ENCODE measurements at regions of chr13 and their contacts with region 1.

Region 1: DNA sequence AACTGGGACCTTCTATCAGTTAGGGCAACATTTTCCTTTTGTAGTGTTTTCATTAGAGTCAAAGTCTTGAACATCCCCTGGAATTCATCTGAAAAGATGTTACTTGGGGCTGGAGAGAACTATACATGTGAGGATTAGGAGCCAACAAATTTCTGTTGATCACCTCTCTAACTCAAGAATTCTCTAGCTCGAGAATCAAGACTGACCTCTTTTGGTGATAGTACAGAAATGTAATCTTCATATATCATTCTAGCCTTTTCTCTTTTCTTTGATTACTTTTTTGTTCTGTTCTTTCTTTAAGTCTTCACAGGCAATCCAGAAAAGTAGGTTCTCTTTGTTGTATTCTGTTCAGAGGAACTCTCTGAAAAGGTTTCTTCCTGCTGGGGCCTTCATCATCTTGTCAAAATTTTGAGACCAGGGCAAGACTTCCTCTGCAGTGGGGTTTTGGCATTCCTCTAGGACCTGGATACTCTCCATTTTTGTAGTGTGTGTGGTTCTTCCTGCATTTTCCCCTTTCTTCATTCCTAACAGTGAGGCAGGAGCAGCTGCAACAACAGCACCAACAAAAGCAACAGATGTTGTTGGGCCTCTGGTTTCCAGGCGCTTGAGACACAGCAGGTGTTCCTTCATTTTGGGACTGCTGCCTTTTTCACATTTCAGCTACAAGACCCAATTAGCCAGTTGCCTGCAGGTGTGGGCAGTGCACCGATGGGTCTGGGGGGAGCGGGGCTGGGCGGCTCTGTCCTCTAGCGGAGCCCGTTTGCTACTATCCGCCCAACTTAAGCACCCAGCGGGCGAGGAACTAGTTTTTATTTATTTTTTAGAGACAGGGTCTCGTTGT is 26.2 kb downstream of the ELF1 start:
- DNase-seq: no peak
- ATAC-seq: peak in 3 of 4 donors; percentile 31 to 42 (median 34)
- H3K4me3 ChIP-seq: no peak overlapping the region
- H3K27ac ChIP-seq: peak overlapping the region in 2 of 12 donors; percentile 20 to 29
- H3K4me1 ChIP-seq: peaks cover 0 to 89% (median 23%) of the 10 kb centered on the region in 12 donors
- H3K27me3 ChIP-seq: no peaks in the 10 kb centered on the region
- CTCF ChIP-seq: peak in 4 of 12 donors; percentile 15 to 33 (median 16)
- POLR2A ChIP-seq: no peak

Region 2: DNA sequence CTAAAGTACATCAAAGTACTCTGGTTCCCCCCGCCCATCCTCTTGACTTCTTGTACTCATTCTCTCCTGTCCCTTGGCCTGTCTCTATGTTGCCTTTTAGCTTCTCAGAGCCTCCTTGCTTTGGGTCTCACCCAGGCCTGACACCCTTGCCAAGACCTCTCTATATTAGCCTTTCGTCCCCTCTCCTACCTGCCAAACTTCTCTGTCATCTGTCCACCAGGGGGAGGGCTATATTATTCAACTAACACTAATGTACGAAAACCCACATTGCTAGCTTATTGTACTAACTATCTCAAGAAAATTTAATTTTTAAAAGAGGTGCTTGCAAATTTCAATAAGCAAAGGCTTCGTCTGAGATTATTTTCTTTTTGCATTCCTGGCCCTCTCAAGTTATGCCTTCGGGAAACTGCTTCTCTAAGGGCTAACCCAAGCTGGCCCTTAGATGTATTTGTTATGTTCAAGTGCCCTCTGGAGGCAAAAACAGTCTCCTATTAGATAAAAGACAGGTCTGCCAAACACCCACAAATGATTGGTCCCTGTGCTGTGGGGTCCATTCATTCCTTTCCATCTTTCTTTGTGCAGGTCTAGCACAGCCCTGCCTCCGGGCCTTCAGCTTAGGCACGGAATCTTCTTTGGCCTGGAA is 215.6 kb before region 1 on chr13:
- intact Hi-C with region 1: loop called in 2 of 10 experiments (anchors 5 to 10 kb)
- DNase-seq: no peak
- ATAC-seq: peak; percentile 72 to 87 (median 80)
- H3K4me3 ChIP-seq: peak overlapping the region in 8 of 12 donors; percentile 21 to 54 (median 34)
- H3K27ac ChIP-seq: peak overlapping the region in 1 of 12 donors; percentile 79
- H3K4me1 ChIP-seq: peaks cover 0 to 19% (median 2%) of the 10 kb centered on the region in 12 donors
- H3K27me3 ChIP-seq: no peaks in the 10 kb centered on the region
- CTCF ChIP-seq: peak; percentile 36 to 81 (median 68)
- POLR2A ChIP-seq: no peak

Region 3: GRCh38 chr13:40798380-40798779 is 194.5 kb before region 1 on chr13:
- intact Hi-C with region 1: no loop called
- DNase-seq: no peak
- ATAC-seq: no peak
- H3K4me3 ChIP-seq: no peak overlapping the region
- H3K27ac ChIP-seq: no peak overlapping the region
- H3K4me1 ChIP-seq: no peaks in the 10 kb centered on the region
- H3K27me3 ChIP-seq: no peaks in the 10 kb centered on the region
- CTCF ChIP-seq: no peak
- POLR2A ChIP-seq: no peak

Region 4: GRCh38 chr13:41040606-41041319 is 47.9 kb after region 1 on chr13:
- intact Hi-C with region 1: no loop called
- DNase-seq: no peak
- ATAC-seq: peak in 1 of 4 donors; percentile 33
- H3K4me3 ChIP-seq: no peak overlapping the region
- H3K27ac ChIP-seq: no peak overlapping the region
- H3K4me1 ChIP-seq: peaks cover 0 to 10% (median 0%) of the 10 kb centered on the region in 12 donors
- H3K27me3 ChIP-seq: no peaks in the 10 kb centered on the region
- CTCF ChIP-seq: no peak
- POLR2A ChIP-seq: no peak

Region 5: GRCh38 chr13:41054212-41054877 is 61.4 kb after region 1 on chr13:
- intact Hi-C with region 1: no loop called
- DNase-seq: no peak
- ATAC-seq: peak in 2 of 4 donors; percentile 38 to 47
- H3K4me3 ChIP-seq: no peak overlapping the region
- H3K27ac ChIP-seq: peak overlapping the region in 11 of 12 donors; percentile 13 to 86 (median 64)
- H3K4me1 ChIP-seq: peaks cover 4 to 97% (median 79%) of the 10 kb centered on the region in 12 donors
- H3K27me3 ChIP-seq: no peaks in the 10 kb centered on the region
- CTCF ChIP-seq: peak; percentile 23 to 63 (median 52)
- POLR2A ChIP-seq: no peak

Measured in heart left ventricle (tissue), 16 donors.